HEK293T (cell line): ENCODE measurements at regions of chr2 and their contacts with region 1.

Region 1: DNA sequence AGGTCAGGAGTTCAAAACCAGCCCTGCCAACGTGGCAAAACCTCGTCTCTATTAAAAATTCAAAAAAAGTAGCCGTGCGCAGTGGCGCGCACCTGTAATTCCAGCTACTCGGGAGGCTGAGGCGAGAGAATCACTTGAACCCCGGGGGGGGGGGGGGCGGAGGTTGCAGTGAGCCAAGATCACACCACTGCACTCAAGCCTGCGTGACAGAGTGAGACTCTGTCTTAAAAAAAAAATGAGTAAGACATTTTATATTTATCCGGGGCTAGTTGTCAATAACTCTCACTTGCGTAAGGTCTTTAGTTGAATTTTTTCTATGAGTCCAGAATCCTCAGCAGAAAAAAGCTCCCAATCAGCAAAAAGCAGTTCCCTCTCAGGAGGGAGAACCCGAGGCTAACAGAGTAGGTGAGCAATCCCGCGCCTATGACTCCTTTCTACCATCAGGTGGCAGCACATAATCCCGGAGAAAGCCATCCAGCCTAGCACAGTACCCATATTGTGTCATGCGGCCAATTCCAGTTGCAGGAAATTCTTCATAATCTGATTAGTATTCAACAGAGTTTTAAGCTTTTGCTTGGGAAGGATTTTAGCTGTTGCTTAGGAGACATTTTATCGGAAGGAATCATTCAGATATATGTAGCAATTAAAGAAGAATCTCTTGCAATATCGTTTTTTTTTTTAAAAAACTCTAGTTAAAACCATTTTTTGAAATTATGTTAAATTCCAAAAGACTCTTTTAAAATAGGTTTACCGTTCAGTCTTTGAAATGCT is 11.9 kb upstream of the CRYGA start:
- DNase-seq: peak; percentile 81

Region 2: GRCh38 chr2:208101716-208102631 is 73.3 kb before region 1 on chr2:
- CTCF ChIA-PET with region 1: interaction called, 11 read pairs
- POLR2A ChIA-PET with region 1: no interaction called
- DNase-seq: no peak

Region 3: GRCh38 chr2:208142240-208142924 is 32.9 kb before region 1 on chr2:
- CTCF ChIA-PET with region 1: interaction called, 14 read pairs
- POLR2A ChIA-PET with region 1: no interaction called
- DNase-seq: no peak

Region 4: DNA sequence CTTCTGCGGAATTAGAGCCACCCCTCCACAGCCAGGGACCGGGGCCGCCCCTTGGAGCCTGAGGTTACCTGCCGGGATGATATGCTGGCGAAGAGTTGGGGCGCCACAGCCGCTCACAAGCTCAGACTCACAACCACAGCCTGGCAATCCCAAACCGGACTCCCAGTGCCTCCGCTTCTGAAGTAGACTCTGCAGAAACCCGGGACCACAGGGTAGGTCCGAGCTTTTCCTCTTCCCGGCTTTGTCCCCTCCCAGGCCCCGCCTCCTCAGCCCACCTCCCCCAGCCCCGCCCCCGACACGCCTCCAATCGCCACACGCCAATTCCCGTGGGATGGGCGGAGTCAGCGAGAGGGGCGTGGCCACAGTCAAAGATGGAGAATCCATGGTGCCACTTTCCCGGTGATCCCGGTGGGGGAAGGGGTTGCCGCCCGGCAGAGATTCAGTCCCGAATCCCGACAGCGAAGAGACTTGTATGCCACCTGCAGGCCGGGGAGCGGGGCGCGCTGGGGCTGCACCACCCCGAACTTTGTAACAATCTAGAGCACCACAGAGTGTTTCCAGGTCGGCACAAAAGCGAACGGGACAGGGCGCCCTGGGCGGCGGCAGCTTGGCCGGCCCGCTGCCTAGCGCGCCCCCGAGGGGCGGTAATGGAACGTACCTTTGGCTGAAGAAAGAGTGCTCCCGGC is 79.8 kb after region 1 on chr2 and contains the start of gene IDH1:
- CTCF ChIA-PET with region 1: interaction called, 12 read pairs
- POLR2A ChIA-PET with region 1: interaction called, 9 read pairs
- DNase-seq: peak; percentile 94